Heart right ventricle (tissue), 16 donors: ENCODE measurements at regions of chr1 and their contacts with region 1.

Region 1: GRCh38 chr1:29230553-29231378 is at the start of gene MECR:
- DNase-seq: peak; percentile 94
- ATAC-seq: peak; percentile 97 to 99 (median 98)
- H3K4me3 ChIP-seq: peak within 1 kb of the TSS; percentile 63 to 93 (median 77)
- H3K27ac ChIP-seq: peak within 1 kb of the TSS in 9 of 10 donors; percentile 43 to 83 (median 71)
- H3K4me1 ChIP-seq: peaks cover 6 to 21% (median 13%) of the 10 kb centered on the region in 9 donors
- H3K27me3 ChIP-seq: peaks cover 0 to 8% (median 0%) of the 10 kb centered on the region in 7 donors
- CTCF ChIP-seq: peak in 6 of 9 donors; percentile 7 to 47 (median 29)
- total RNA-seq, gene MECR: 27.8 to 45.6 (median 38.7) TPM

Region 2: GRCh38 chr1:29849038-29849750 is 618.4 kb after region 1 on chr1:
- intact Hi-C with region 1: loop called in 4 of 10 experiments (anchors 5 to 10 kb)
- DNase-seq: no peak
- ATAC-seq: no peak
- H3K4me3 ChIP-seq: no peak overlapping the region
- H3K27ac ChIP-seq: no peak overlapping the region
- H3K4me1 ChIP-seq: peaks cover 0 to 15% (median 0%) of the 10 kb centered on the region in 9 donors
- H3K27me3 ChIP-seq: peaks cover 0 to 68% (median 38%) of the 10 kb centered on the region in 7 donors
- CTCF ChIP-seq: peak in 8 of 9 donors; percentile 13 to 58 (median 45)

Region 3: GRCh38 chr1:30106125-30106524 is 875.4 kb after region 1 on chr1:
- intact Hi-C with region 1: loop called in 6 of 10 experiments (anchors 5 to 10 kb)
- DNase-seq: no peak
- ATAC-seq: peak in 4 of 8 donors; percentile 41 to 63 (median 50)
- H3K4me3 ChIP-seq: no peak overlapping the region
- H3K27ac ChIP-seq: no peak overlapping the region
- H3K4me1 ChIP-seq: no peaks in the 10 kb centered on the region
- H3K27me3 ChIP-seq: peaks cover 0 to 95% (median 74%) of the 10 kb centered on the region in 7 donors
- CTCF ChIP-seq: peak; percentile 21 to 59 (median 47)

Region 4: DNA sequence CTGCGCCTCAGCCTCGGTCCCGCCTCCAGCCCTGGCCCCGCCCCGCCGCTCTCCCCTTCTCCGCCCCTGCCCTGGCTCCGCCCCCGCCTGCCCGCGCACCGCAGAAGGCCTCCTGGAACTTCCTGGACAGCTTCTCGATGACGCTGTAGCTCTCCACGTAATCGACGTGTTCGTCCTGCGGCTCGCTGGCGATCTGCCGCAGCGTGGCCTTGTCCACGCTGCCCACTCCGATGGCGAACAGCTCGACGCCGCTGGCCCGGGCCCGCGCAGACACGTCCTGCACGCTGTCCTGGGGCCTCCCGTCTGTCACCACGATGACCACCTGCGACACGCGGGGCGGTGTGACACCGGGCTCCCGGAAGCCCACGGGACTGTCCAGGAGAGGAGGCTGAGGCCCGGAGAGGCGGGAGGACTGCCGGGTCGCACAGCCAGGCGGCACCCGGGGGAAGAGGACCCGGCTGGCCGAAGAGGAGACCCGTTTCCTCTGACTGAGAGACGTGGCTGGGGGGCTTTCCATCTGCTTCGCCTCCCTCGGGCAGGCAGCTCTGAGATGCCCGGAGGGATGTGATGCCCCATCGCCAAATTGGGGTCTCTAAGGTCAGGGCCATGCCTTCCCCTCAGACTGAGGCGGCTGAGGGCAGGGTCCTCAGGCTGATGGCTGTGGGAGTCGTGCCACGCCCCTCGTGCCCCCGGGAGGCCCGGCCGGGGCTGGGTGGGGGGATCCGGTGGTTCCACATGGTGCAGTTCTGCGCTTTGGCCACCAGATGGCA is 1488.1 kb after region 1 on chr1:
- intact Hi-C with region 1: loop called in 2 of 10 experiments (anchors 5 to 10 kb)
- DNase-seq: peak; percentile 79 to 85
- ATAC-seq: peak; percentile 86 to 92 (median 89)
- H3K4me3 ChIP-seq: peak overlapping the region; percentile 48 to 65 (median 60)
- H3K27ac ChIP-seq: peak overlapping the region; percentile 74 to 99 (median 96)
- H3K4me1 ChIP-seq: peaks cover 0 to 15% (median 10%) of the 10 kb centered on the region in 9 donors
- H3K27me3 ChIP-seq: no peaks in the 10 kb centered on the region
- CTCF ChIP-seq: peak; percentile 93 to 100 (median 98)